Heart left ventricle (tissue), 16 donors: ENCODE measurements at regions of chr7 and their contacts with region 1.

Region 1: DNA sequence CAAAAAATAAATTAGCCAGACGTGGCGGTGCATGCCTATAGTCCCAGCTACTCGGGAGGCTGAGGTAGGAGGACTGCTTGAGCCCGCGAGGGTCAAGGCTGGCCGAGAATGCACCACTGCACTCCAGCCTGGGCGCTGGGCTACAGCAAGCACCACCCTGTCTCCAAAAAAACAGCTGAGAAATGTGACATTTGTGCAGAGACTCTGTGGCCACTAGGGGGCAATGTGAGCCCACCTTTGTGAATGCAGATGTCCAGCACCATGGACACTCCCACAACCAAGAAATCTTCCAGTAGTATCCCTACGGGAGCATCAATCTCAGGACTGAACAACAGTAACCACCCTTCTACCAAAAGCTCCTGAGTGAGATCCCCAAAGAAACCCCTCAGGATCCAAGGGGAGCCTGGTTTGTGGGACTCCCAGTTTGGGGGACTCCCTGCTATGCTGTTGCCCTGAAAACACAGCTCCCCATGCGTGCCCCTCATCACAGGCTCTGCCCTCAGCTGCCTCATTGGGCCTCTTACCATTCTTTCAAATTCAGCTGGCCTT is 6.2 kb upstream of the AHCYL2 start:
- DNase-seq: peak; percentile 81 to 92 (median 84)
- ATAC-seq: peak; percentile 81 to 92 (median 90)
- H3K4me3 ChIP-seq: no peak overlapping the region
- H3K27ac ChIP-seq: no peak overlapping the region
- H3K4me1 ChIP-seq: peaks cover 0 to 16% (median 0%) of the 10 kb centered on the region in 12 donors
- H3K27me3 ChIP-seq: peaks cover 0 to 6% (median 0%) of the 10 kb centered on the region in 9 donors
- CTCF ChIP-seq: peak; percentile 81 to 96 (median 92)
- POLR2A ChIP-seq: no peak

Region 2: GRCh38 chr7:128954830-128955802 is 263.5 kb before region 1 on chr7:
- intact Hi-C with region 1: no loop called
- DNase-seq: no peak
- ATAC-seq: no peak
- H3K4me3 ChIP-seq: no peak overlapping the region
- H3K27ac ChIP-seq: no peak overlapping the region
- H3K4me1 ChIP-seq: no peaks in the 10 kb centered on the region
- H3K27me3 ChIP-seq: no peaks in the 10 kb centered on the region
- CTCF ChIP-seq: no peak
- POLR2A ChIP-seq: no peak

Region 3: DNA sequence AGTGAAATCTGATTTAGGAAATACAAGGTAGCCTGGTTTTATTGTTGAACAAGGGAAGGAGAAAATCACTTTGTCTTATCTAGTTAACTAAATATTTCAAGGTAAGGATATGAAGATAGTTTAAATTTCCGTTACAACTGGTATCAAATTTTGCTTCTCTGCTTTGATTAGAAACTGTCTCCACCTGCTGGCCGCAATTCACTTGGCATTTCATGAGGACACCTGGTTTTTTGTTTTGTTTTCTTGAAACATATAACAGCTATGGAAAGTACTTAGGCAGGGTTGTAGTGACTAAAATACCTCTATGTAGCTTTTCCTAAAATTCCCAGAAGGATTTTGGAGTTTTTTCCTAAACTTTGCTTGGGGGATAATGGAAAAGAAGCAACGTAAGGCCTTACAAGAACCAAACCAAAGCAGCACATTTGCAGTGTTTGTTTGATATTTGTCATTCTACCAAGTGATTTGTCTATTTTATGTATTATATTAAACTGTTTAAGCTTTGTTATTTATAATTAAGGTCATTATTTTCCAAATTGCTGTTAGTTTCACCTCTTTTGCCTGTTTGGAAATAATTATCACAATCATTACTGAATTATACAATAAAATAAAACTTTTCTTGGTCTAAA is 79.8 kb after region 1 on chr7:
- intact Hi-C with region 1: loop called (anchors 1 to 5 kb)
- DNase-seq: peak in 1 of 5 donors; percentile 44
- ATAC-seq: no peak
- H3K4me3 ChIP-seq: no peak overlapping the region
- H3K27ac ChIP-seq: no peak overlapping the region
- H3K4me1 ChIP-seq: peaks cover 0 to 10% (median 5%) of the 10 kb centered on the region in 12 donors
- H3K27me3 ChIP-seq: no peaks in the 10 kb centered on the region
- CTCF ChIP-seq: peak; percentile 56 to 77 (median 66)
- POLR2A ChIP-seq: no peak